CD8-positive, alpha-beta T cell (primary cell): ENCODE measurements at regions of chr2 and their contacts with region 1.

Region 1: DNA sequence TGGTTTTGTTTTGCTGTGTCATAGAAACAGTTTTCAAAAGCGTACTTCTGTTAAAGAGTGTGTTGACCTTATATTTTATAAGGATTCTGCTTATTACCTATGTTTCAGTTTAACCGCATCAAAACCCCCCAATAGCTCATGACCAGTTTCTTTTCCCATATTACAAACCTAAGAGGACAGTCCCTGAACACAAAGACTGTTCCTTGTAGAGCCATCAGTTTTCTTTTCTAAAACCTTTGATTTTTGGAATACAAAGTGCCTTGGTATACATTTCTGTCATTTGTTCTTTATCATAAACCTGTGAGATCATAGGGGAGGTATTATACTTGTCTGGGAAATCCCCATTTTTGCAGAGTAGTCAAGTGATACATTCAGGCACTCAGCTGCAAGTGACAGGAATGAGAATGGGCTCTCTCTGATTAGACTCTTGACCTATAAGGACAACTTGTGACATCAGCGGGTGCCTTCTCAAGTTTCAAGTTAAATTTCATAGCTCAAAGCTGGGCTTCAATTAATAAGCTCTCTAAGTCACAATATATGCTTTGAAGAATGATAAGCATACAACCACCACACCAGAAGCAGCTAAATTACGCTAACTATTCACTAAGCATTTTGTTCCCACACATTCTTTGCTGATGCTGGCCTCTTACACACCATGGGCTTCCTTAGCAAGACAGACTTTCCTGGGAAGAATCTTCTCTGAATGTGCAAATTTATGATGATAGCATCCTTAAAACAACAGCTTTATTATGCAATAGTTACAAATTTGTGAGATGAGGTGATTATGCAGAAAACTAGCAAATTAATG is 97.5 kb upstream of the CD302 start:
- DNase-seq: peak in 2 of 9 experiments; percentile 9 to 19
- ATAC-seq: peak; percentile 44
- H3K4me3 ChIP-seq: no peak overlapping the region
- H3K4me3 Mint-ChIP-seq: no peak overlapping the region
- H3K27ac ChIP-seq: no peak overlapping the region
- H3K27ac Mint-ChIP-seq: no peak overlapping the region
- H3K4me1 ChIP-seq: no peaks in the 10 kb centered on the region
- H3K4me1 Mint-ChIP-seq: peaks cover 74% of the 10 kb centered on the region
- H3K27me3 ChIP-seq: no peaks in the 10 kb centered on the region
- H3K27me3 Mint-ChIP-seq: no peaks in the 10 kb centered on the region
- CTCF ChIP-seq: no peak

Region 2: GRCh38 chr2:159140070-159140769 is 755.2 kb before region 1 on chr2:
- CTCF ChIA-PET with region 1: no interaction called
- POLR2A ChIA-PET with region 1: no interaction called
- intact Hi-C with region 1: no loop called
- DNase-seq: no peak
- ATAC-seq: no peak
- H3K4me3 ChIP-seq: no peak overlapping the region
- H3K4me3 Mint-ChIP-seq: no peak overlapping the region
- H3K27ac ChIP-seq: no peak overlapping the region
- H3K27ac Mint-ChIP-seq: no peak overlapping the region
- H3K4me1 ChIP-seq: peaks cover 4% of the 10 kb centered on the region
- H3K4me1 Mint-ChIP-seq: peaks cover 6% of the 10 kb centered on the region
- H3K27me3 ChIP-seq: no peaks in the 10 kb centered on the region
- H3K27me3 Mint-ChIP-seq: peaks cover 2% of the 10 kb centered on the region
- CTCF ChIP-seq: no peak

Region 3: DNA sequence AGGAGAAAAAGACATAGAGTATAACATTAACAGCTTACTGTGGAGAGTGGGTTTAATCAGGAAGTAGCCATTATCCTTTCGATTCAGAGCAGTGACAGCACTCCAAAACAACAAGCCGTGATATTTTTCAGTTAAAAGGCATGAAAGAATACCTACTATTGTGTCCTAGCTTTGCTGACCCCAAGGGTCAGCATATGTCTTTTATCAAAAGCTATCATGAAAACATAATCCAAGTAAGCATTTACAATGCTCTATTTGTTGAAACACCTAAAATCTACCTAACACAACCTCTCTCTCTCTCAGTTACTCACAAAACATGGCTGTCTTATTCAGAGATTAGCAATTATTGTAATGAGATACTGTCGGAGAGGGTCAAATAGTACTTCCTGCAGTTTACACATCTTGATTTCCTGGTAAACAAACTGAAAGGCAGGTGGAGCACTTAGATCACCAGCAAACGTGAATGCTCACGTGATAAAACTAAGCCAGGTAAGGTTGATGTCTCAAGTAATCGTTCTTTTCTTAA is 379.2 kb before region 1 on chr2:
- CTCF ChIA-PET with region 1: no interaction called
- POLR2A ChIA-PET with region 1: no interaction called
- intact Hi-C with region 1: loop called (anchors 2 to 5 kb)
- DNase-seq: peak in 3 of 9 experiments; percentile 29 to 84 (median 74)
- ATAC-seq: peak; percentile 96
- H3K4me3 ChIP-seq: peak overlapping the region; percentile 48 to 50
- H3K4me3 Mint-ChIP-seq: peak overlapping the region; percentile 81
- H3K27ac ChIP-seq: peak overlapping the region; percentile 69 to 72
- H3K27ac Mint-ChIP-seq: peak overlapping the region; percentile 95
- H3K4me1 ChIP-seq: peaks cover 19% of the 10 kb centered on the region
- H3K4me1 Mint-ChIP-seq: peaks cover 38% of the 10 kb centered on the region
- H3K27me3 ChIP-seq: no peaks in the 10 kb centered on the region
- H3K27me3 Mint-ChIP-seq: no peaks in the 10 kb centered on the region
- CTCF ChIP-seq: no peak

Region 4: DNA sequence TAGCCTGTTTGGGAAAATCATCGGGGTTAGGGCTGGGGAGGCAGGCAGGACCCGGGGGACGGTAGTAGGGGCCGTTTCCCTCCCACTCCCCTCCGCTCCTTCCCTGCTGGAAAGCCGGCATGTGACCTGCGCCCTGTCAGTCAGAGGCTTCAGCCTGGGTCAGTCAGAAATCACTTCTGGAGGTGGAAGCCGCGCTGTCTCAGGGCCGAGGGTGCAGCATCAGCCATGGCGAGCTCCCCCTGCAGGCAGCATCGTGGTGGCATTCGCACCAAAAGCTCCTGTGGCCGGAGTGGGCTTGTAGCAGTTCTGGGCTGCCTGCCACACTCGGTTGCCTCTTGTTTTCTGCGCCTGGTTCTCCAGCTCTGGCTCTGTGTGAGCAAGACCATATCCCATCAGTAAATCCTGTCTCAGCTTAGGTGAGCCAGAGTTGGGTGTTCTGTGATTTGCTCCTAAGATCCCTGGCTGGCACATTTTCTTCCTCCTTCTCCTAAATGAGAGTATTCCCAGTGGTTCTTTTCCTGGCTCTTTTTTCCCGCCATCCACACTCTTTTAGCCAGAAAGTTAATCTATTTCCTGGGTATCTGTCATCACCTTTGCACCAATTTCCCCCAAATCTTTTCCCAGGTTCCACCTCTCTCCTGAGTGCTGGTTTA is 26.4 kb after region 1 on chr2:
- CTCF ChIA-PET with region 1: interaction called, 5 read pairs
- POLR2A ChIA-PET with region 1: no interaction called
- intact Hi-C with region 1: loop called in 1 of 2 experiments (anchors 2 kb)
- DNase-seq: peak; percentile 53 to 78 (median 71)
- ATAC-seq: peak; percentile 91
- H3K4me3 ChIP-seq: no peak overlapping the region
- H3K4me3 Mint-ChIP-seq: no peak overlapping the region
- H3K27ac ChIP-seq: no peak overlapping the region
- H3K27ac Mint-ChIP-seq: no peak overlapping the region
- H3K4me1 ChIP-seq: peaks cover 6% of the 10 kb centered on the region
- H3K4me1 Mint-ChIP-seq: no peaks in the 10 kb centered on the region
- H3K27me3 ChIP-seq: peaks cover 0 to 4% of the 10 kb centered on the region in 2 experiments
- H3K27me3 Mint-ChIP-seq: peaks cover 17% of the 10 kb centered on the region
- CTCF ChIP-seq: peak; percentile 75

Region 5: GRCh38 chr2:160166002-160166401 is 270.5 kb after region 1 on chr2:
- CTCF ChIA-PET with region 1: no interaction called
- POLR2A ChIA-PET with region 1: no interaction called
- intact Hi-C with region 1: no loop called
- DNase-seq: no peak
- ATAC-seq: no peak
- H3K4me3 ChIP-seq: no peak overlapping the region
- H3K4me3 Mint-ChIP-seq: no peak overlapping the region
- H3K27ac ChIP-seq: no peak overlapping the region
- H3K27ac Mint-ChIP-seq: no peak overlapping the region
- H3K4me1 ChIP-seq: no peaks in the 10 kb centered on the region
- H3K4me1 Mint-ChIP-seq: no peaks in the 10 kb centered on the region
- H3K27me3 ChIP-seq: no peaks in the 10 kb centered on the region
- H3K27me3 Mint-ChIP-seq: no peaks in the 10 kb centered on the region
- CTCF ChIP-seq: no peak